Activated T-helper 1 cell treated with anti-CD3 and anti-CD28 coated beads, Interleukin-12 subunit alpha, Interleukin-12 subunit beta, Interleukin-2, Interleukin-4 antibody, amounts not matched to agents 30 ng/mL and 10 ng/mL and 1 ng/mL, durations not matched to agents 14 hours and 24 hours and 36 hours (primary cell): ENCODE measurements at regions of chr1 and their contacts with region 1.

Region 1: GRCh38 chr1:37486680-37487618 is 12.6 kb downstream of the ZC3H12A start:
- DNase-seq: peak; percentile 63
- H3K4me3 Mint-ChIP-seq: no peak overlapping the region
- H3K27ac Mint-ChIP-seq: peak overlapping the region; percentile 68
- H3K4me1 Mint-ChIP-seq: peaks cover 14% of the 10 kb centered on the region
- H3K27me3 Mint-ChIP-seq: no peaks in the 10 kb centered on the region

Region 2: GRCh38 chr1:37455516-37455915 is 31.4 kb before region 1 on chr1:
- intact Hi-C with region 1: loop called (anchors 1 kb)
- DNase-seq: no peak
- H3K4me3 Mint-ChIP-seq: no peak overlapping the region
- H3K27ac Mint-ChIP-seq: no peak overlapping the region
- H3K4me1 Mint-ChIP-seq: peaks cover 7% of the 10 kb centered on the region
- H3K27me3 Mint-ChIP-seq: no peaks in the 10 kb centered on the region